GM18951 (cell line): ENCODE measurements at regions of chr4 and their contacts with region 1.

Region 1: GRCh38 chr4:176340871-176341685 is 21.3 kb downstream of the SPCS3 start:
- POLR2A ChIP-seq: no peak

Region 2: DNA sequence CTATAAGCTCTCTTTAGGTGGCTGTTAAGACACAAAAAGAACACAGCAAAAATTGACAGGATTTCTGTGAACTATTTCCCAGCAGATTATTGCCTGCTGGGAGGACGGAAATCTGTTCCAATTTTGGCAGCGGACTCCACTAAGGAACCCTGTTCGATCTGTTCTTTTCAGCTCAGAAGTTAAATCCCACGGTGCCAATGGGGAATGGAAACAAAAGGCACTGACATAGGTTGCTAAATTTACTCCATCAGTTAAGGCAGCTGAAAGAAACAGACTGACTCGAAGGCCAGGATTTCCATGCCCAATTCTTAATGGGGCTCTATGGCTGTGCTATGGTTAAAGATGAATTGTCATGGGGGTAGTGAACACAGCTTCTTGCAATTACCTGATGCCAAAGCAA is 1692.3 kb before region 1 on chr4:
- in situ Hi-C with region 1: no loop called
- POLR2A ChIP-seq: no peak

Region 3: DNA sequence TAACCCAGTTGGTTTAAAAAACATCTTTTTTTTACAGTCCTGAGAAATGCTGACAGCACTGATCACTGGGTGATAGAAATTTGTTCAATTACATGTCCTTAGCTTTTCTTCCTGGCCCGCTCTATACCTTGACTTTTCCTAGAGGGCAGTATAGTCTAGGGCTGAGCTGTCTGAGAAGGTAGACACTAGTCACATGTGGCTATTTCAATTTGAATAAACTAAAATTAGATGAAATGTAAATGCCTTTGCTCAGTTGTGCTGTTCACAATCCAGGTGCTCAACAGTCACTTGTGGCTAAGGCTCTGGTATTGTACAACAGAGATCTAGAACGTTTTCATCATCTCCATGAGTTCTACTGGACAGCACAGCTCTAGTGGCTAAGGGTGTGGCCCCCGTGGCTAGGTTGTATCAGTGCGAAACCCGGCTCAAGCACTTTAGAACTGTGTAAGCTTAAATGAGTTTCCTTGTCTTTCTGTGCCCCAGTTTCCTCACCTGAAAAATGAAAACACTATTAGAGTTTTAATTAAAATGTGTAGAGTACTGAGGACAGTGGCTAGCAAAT is 387.0 kb before region 1 on chr4:
- in situ Hi-C with region 1: loop called (anchors 25 kb)
- POLR2A ChIP-seq: no peak